Common myeloid progenitor, CD34-positive (primary cell): ENCODE measurements at regions of chr2 and their contacts with region 1.

Region 1: GRCh38 chr2:164873095-164873908 is 31.7 kb upstream of the COBLL1 start:
- DNase-seq: no peak
- H3K4me3 ChIP-seq: no peak overlapping the region
- H3K27ac ChIP-seq: no peak overlapping the region
- H3K4me1 ChIP-seq: peaks cover 0 to 4% (median under 1%) of the 10 kb centered on the region in 4 experiments
- H3K27me3 ChIP-seq: no peaks in the 10 kb centered on the region

Region 2: GRCh38 chr2:164890544-164890943 is 17.2 kb after region 1 on chr2:
- CTCF ChIA-PET with region 1: interaction called, 11 read pairs
- POLR2A ChIA-PET with region 1: interaction called, 3 read pairs
- DNase-seq: peak; percentile 31 to 88 (median 82)
- H3K4me3 ChIP-seq: no peak overlapping the region
- H3K27ac ChIP-seq: peak overlapping the region in 1 of 2 experiments; percentile 23
- H3K4me1 ChIP-seq: peaks cover 12 to 33% (median 25%) of the 10 kb centered on the region in 4 experiments
- H3K27me3 ChIP-seq: no peaks in the 10 kb centered on the region